ENCODE measurements at regions of chr11 and their contacts with region 1.

Region 1: GRCh38 chr11:64304316-64305072 is 830 bp upstream of the ESRRA start:
- DNase-seq: peak; percentile 78
- H3K4me3 ChIP-seq: peak overlapping the region; percentile 72
- H3K27ac ChIP-seq: peak overlapping the region; percentile 84
- H3K27me3 ChIP-seq: peaks cover 14% of the 10 kb centered on the region
- CTCF ChIP-seq: peak; percentile 84

Region 2: GRCh38 chr11:64204464-64204989 is 100.0 kb before region 1 on chr11:
- CTCF ChIA-PET with region 1: interaction called, 125 read pairs
- POLR2A ChIA-PET with region 1: interaction called, 7 read pairs
- DNase-seq: peak; percentile 95
- H3K4me3 ChIP-seq: no peak overlapping the region
- H3K27ac ChIP-seq: no peak overlapping the region
- H3K27me3 ChIP-seq: no peaks in the 10 kb centered on the region
- CTCF ChIP-seq: peak; percentile 67

Region 3: DNA sequence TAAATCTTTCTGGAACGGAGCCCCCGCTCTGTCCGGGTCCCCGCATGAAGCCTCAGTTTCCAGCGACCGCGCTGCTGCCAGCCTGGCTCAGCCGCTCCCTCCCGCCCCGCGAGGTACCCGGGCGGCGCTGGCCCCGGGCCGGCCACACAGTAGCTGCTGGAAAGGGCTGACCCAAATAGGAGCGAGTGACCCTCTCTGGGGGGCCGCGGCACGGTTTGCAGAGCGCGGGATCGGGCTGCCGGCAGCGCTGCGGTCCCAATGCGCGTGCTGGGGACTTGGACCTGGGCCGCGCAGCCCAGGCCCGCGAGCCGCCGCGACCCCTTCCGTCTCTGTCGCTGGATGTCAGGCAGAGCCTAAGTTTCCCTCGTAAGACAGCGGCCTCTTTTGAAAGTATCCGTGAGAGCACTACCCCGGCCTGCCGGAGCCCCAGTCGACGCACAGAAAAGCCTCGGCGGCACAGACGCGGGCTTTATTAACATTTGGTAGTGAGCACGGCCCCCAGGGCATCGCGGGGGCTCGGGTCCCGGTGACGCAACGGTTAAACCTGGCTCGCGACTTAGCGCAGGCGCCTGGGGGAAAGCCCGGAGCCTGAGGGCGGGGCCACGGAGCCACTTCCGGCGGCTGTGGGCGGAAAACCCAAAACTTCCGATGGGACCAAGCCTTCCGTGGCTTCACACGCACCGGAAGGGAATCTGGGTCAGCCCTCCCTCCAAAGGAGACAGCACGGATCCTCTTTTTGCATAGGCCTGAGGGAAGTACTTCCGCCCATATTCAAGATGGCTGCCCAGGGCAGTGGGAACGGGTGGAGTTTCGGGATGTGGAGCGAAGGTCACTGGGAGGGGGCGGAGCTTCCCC is 34.9 kb before region 1 on chr11:
- CTCF ChIA-PET with region 1: interaction called, 24 read pairs
- POLR2A ChIA-PET with region 1: interaction called, 12 read pairs
- DNase-seq: peak; percentile 100
- H3K4me3 ChIP-seq: peak overlapping the region; percentile 74
- H3K27ac ChIP-seq: peak overlapping the region; percentile 95
- H3K27me3 ChIP-seq: no peaks in the 10 kb centered on the region
- CTCF ChIP-seq: no peak; the same call in 1 of the 2 replicates

Region 4: GRCh38 chr11:64284048-64284961 is 20.2 kb before region 1 on chr11 and contains the start of gene BAD:
- CTCF ChIA-PET with region 1: interaction called, 124 read pairs
- POLR2A ChIA-PET with region 1: interaction called, 5 read pairs
- DNase-seq: peak; percentile 68
- H3K4me3 ChIP-seq: peak within 1 kb of the TSS; percentile 73
- H3K27ac ChIP-seq: peak within 1 kb of the TSS; percentile 88
- H3K27me3 ChIP-seq: no peaks in the 10 kb centered on the region
- CTCF ChIP-seq: no peak
- polyA plus RNA-seq, gene BAD: 36.1 and 54.8 TPM in 2 replicates

Region 5: DNA sequence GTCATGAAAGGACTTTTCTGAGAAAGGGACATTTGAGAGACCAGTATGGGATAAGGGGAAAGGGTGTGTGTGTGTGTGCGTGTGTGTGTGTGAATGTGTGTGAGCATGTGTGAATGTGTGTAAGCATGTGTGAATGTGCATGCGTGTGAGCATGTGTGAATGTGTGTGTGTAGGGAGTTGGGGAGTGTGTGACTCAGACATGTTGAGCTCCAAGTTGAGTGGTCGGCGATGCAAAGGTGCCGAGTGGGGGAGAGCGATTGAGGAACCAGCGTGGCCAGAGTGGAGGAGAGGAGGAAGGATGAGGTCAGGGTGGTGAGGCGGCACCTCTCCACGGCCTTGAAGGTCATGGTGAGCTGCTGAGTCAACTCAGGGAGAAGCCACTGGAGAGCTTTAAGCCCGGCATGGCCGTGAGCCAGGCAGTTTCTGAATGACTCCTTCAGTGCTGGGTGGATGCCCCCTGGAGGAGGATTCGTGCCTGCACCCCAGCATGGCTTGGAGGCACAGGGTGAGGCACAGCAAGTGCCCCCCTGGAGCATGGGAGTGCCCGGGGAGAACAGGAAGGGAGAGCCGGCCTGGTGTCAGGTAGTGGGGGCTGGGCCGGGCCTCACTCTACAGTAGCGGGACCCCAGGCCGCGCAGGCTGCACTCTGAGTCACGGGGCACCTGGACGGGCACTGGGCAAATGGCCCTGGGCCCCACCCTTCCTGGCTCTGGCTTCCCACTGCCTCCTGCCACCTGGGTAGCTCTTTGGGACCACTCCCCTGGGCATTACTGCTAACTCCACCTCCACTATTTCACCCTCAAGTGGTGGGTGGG is 27.3 kb after region 1 on chr11:
- CTCF ChIA-PET with region 1: interaction called, 13 read pairs
- POLR2A ChIA-PET with region 1: no interaction called
- DNase-seq: peak; percentile 38
- H3K4me3 ChIP-seq: no peak overlapping the region
- H3K27ac ChIP-seq: no peak overlapping the region
- H3K27me3 ChIP-seq: peaks cover 3% of the 10 kb centered on the region
- CTCF ChIP-seq: peak; percentile 63